ENCODE measurements at regions of chr20 and their contacts with region 1.

Region 1: GRCh38 chr20:54199721-54200176 is 8.1 kb upstream of the PFDN4 start:
- DNase-seq: peak; percentile 64 to 81
- H3K4me3 ChIP-seq: no peak overlapping the region
- H3K27ac ChIP-seq: no peak overlapping the region
- H3K4me1 ChIP-seq: peaks cover 26% of the 10 kb centered on the region
- H3K27me3 ChIP-seq: no peaks in the 10 kb centered on the region
- CTCF ChIP-seq: peak; percentile 98

Region 2: DNA sequence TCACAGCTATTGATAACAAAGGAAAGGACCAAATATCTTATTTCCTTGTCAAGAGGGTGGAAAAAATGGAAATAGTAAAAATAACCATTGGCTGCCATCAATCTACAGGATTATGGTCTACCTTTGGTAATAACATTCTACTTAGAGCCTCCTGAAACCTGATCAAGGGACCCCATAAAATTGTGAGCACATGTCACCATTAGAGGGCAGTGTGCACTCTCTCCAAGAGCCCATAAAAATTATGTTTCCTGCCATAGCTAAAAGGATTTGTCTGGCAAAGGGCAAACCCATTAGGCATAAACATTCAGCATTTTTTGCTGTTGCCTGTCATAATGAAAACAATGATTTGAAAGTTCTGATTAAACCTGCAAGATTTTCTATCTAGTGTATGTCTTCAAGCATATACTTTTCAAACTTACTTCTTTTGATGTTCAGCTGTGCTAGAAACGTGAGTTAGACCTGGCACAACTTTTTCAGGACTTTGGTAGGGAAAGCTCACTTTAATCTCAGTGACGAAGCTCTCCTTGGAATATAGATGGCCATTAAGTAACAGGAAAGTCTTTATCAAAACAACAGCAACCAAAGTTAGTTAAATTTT is 1887.5 kb before region 1 on chr20:
- CTCF ChIA-PET with region 1: interaction called, 3 read pairs
- POLR2A ChIA-PET with region 1: no interaction called
- intact Hi-C with region 1: loop called (anchors 5 kb)
- DNase-seq: peak; percentile 35 to 51
- H3K4me3 ChIP-seq: no peak overlapping the region
- H3K27ac ChIP-seq: no peak overlapping the region
- H3K4me1 ChIP-seq: no peaks in the 10 kb centered on the region
- H3K27me3 ChIP-seq: peaks cover 71% of the 10 kb centered on the region
- CTCF ChIP-seq: peak; percentile 87

Region 3: DNA sequence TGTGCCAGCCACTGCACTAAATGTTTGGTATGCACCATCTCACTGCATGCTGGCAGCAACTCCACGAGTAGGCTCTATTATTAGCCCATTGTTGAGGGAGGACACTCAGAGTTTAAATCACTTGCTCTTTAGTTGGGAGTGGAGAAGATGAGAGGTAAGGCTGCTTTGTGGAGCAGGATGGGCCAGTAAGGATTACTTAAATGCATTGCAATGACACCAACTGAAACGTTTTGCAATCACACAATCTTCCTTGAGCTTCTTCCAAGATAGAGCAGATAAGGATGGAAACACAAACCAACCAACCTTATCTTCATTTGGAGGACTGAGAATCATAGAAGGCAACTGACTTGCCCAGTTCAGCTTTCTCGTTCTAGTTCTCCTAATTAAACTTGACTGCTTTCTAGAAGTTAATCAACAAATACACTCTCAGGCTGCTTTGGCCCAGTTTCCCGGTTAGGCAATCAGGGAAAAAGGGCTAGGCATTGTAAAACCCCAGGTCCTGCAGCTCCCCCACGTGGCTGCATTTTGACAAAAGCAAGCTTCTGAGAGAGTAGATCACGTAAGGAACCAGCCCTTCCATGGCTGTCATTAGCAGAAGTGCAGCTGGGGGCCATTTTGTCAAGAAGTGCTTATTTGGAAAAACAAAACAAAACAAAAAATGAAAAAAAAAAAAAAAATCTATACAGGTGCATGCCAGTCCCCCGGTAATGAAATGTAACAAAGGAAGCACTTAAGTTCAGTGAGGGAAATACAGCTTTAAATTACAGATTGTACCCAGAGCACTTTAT is 260.0 kb before region 1 on chr20:
- CTCF ChIA-PET with region 1: no interaction called
- POLR2A ChIA-PET with region 1: no interaction called
- intact Hi-C with region 1: loop called (anchors 2 kb)
- DNase-seq: peak; percentile 89 to 90
- H3K4me3 ChIP-seq: no peak overlapping the region
- H3K27ac ChIP-seq: peak overlapping the region; percentile 65
- H3K4me1 ChIP-seq: peaks cover 26% of the 10 kb centered on the region
- H3K27me3 ChIP-seq: no peaks in the 10 kb centered on the region
- CTCF ChIP-seq: peak; percentile 96

Region 4: DNA sequence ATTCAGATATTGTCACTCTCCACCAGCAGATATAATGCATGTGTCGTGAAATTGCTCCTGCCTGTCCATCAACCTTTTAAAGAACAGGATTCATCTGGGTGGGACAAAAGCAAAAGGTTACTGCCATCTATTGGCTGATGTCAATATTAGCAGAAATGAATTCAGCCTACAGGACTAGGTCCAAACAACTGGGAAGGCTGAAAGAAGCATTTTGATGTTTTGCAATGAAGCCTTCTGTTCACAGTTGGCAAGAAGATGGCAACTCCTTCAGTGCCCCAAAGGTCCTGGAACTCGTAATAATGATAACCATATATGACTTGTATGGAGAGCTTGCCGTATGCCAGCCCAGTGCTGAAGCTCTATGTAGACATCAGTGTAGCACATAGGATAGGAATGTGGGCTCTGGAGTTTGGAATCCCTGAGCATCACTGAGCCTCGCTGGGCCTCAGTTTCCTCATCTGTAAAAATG is 136.9 kb before region 1 on chr20:
- CTCF ChIA-PET with region 1: no interaction called
- POLR2A ChIA-PET with region 1: no interaction called
- intact Hi-C with region 1: loop called (anchors 1 kb)
- DNase-seq: peak in 1 of 2 experiments; percentile 60
- H3K4me3 ChIP-seq: no peak overlapping the region
- H3K27ac ChIP-seq: no peak overlapping the region
- H3K4me1 ChIP-seq: peaks cover 13% of the 10 kb centered on the region
- H3K27me3 ChIP-seq: no peaks in the 10 kb centered on the region
- CTCF ChIP-seq: peak; percentile 79

Region 5: GRCh38 chr20:54132612-54133433 is 66.9 kb before region 1 on chr20:
- CTCF ChIA-PET with region 1: interaction called, 3 read pairs
- POLR2A ChIA-PET with region 1: interaction called, 4 read pairs
- intact Hi-C with region 1: loop called (anchors 2 kb)
- DNase-seq: peak; percentile 62 to 100
- H3K4me3 ChIP-seq: peak overlapping the region; percentile 6; the same call in 1 of the 2 replicates
- H3K27ac ChIP-seq: peak overlapping the region; percentile 99
- H3K4me1 ChIP-seq: peaks cover 48% of the 10 kb centered on the region
- H3K27me3 ChIP-seq: no peaks in the 10 kb centered on the region
- CTCF ChIP-seq: no peak

Region 6: DNA sequence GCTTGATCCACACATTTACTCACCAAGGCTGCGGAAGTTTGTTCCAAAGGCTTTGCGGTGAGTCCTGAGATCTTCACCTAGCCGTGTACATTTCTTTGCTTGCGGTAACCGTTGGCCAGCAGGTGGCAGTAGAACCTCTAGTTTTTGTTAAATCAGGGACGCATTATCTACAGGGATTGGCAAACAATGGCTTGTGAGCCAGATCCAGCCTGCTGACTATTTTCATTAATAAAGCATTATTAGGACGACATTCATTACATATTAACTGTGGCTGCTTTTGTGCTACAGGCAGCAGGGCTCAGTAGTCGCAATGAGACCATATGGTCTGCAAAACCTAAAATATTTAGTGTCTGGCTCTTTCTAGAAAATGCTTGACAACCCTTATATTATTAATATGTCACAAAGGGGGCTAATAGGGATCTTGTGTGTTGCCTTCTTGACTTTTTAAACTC is 449.8 kb after region 1 on chr20:
- CTCF ChIA-PET with region 1: no interaction called
- POLR2A ChIA-PET with region 1: no interaction called
- intact Hi-C with region 1: loop called (anchors 1 kb)
- DNase-seq: peak; percentile 52 to 64
- H3K4me3 ChIP-seq: no peak overlapping the region
- H3K27ac ChIP-seq: no peak overlapping the region
- H3K4me1 ChIP-seq: no peaks in the 10 kb centered on the region
- H3K27me3 ChIP-seq: peaks cover 40% of the 10 kb centered on the region
- CTCF ChIP-seq: peak; percentile 90

Measured in PC-9 (cell line).